ENCODE measurements at regions of chr14 and their contacts with region 1.

Region 1: DNA sequence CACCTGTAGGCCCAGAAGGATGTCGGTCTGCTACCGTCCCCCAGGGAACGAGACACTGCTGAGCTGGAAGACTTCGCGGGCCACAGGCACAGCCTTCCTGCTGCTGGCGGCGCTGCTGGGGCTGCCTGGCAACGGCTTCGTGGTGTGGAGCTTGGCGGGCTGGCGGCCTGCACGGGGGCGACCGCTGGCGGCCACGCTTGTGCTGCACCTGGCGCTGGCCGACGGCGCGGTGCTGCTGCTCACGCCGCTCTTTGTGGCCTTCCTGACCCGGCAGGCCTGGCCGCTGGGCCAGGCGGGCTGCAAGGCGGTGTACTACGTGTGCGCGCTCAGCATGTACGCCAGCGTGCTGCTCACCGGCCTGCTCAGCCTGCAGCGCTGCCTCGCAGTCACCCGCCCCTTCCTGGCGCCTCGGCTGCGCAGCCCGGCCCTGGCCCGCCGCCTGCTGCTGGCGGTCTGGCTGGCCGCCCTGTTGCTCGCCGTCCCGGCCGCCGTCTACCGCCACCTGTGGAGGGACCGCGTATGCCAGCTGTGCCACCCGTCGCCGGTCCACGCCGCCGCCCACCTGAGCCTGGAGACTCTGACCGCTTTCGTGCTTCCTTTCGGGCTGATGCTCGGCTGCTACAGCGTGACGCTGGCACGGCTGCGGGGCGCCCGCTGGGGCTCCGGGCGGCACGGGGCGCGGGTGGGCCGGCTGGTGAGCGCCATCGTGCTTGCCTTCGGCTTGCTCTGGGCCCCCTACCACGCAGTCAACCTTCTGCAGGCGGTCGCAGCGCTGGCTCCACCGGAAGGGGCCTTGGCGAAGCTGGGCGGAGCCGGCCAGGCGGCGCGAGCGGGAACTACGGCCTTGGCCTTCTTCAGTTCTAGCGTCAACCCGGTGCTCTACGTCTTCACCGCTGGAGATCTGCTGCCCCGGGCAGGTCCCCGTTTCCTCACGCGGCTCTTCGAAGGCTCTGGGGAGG is at the start of gene LTB4R:
- DNase-seq: peak; percentile 77
- ATAC-seq: peak; percentile 89
- H3K4me3 Mint-ChIP-seq: peak within 1 kb of the TSS; percentile 72
- H3K27ac Mint-ChIP-seq: peak within 1 kb of the TSS; percentile 94
- H3K4me1 Mint-ChIP-seq: peaks cover 84% of the 10 kb centered on the region
- H3K27me3 Mint-ChIP-seq: no peaks in the 10 kb centered on the region
- total RNA-seq, gene LTB4R: 26.9 to 28.0 TPM

Region 2: DNA sequence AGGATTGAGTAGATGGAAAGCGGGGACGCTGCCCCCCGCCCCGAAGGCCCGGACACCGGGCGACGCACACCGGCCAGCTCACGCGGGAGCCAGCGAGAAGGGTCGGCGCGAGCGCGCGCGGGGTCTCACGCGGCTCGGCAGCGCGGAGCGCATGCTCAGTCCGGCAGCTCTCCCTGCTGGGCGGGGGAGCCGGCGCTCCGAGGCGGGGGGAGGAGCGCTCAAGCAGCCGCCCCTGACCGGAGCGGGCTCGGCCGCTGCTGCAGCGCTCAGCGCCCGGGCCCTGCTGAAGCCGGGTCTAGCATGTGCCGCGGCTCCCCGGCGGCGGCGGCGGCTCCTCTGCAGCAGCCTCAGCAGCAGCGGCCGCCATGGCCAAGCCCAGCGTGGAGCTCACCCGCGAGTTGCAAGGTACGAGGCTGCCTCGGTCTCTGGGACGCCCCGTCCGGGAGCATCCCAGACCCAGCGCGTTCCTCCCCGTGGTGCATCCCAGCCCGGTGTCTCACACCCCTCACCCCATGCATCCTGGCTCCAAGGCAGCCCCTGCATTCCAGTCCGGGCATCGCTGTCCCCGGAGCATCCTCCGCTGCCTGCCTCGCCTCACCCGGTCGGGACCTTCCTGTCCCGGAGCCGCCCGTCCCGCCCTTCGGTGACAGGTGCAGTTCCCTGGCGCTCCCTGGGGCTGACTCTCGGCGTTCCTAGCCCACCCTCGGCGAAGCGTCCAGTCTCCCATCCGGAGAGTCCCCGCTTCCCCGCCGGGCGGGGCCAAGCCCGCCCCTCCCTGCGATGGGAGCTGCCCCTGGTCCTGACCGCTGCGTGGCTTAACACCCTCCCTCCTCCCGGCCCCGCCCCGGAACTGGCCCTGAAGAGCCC is 258.9 kb before region 1 on chr14 and contains the start of gene CARMIL3:
- CTCF ChIA-PET with region 1: no interaction called
- POLR2A ChIA-PET with region 1: no interaction called
- DNase-seq: peak; percentile 73
- ATAC-seq: peak; percentile 85
- H3K4me3 Mint-ChIP-seq: peak within 1 kb of the TSS; percentile 70
- H3K27ac Mint-ChIP-seq: peak within 1 kb of the TSS; percentile 70
- H3K4me1 Mint-ChIP-seq: peaks cover 26% of the 10 kb centered on the region
- H3K27me3 Mint-ChIP-seq: peaks cover 36% of the 10 kb centered on the region
- total RNA-seq, gene CARMIL3: 0.86 to 0.95 TPM

Region 3: GRCh38 chr14:24271134-24271833 is 39.6 kb before region 1 on chr14 and contains the start of gene RABGGTA:
- CTCF ChIA-PET with region 1: interaction called, 57 read pairs
- POLR2A ChIA-PET with region 1: interaction called, 4 read pairs
- DNase-seq: peak; percentile 93
- ATAC-seq: peak; percentile 94
- H3K4me3 Mint-ChIP-seq: peak within 1 kb of the TSS; percentile 90
- H3K27ac Mint-ChIP-seq: peak within 1 kb of the TSS; percentile 91
- H3K4me1 Mint-ChIP-seq: peaks cover 47% of the 10 kb centered on the region
- H3K27me3 Mint-ChIP-seq: no peaks in the 10 kb centered on the region
- total RNA-seq, gene RABGGTA: 47.7 to 51.8 TPM

Region 4: GRCh38 chr14:24289649-24290249 is 21.2 kb before region 1 on chr14:
- CTCF ChIA-PET with region 1: interaction called, 22 read pairs
- POLR2A ChIA-PET with region 1: no interaction called
- DNase-seq: peak; percentile 68
- ATAC-seq: peak; percentile 84
- H3K4me3 Mint-ChIP-seq: no peak overlapping the region
- H3K27ac Mint-ChIP-seq: no peak overlapping the region
- H3K4me1 Mint-ChIP-seq: peaks cover 28% of the 10 kb centered on the region
- H3K27me3 Mint-ChIP-seq: no peaks in the 10 kb centered on the region

Region 5: GRCh38 chr14:24339284-24340151 is 28.6 kb after region 1 on chr14 and contains the start of gene RIPK3:
- CTCF ChIA-PET with region 1: interaction called, 142 read pairs
- POLR2A ChIA-PET with region 1: no interaction called
- DNase-seq: peak; percentile 82
- ATAC-seq: peak; percentile 97
- H3K4me3 Mint-ChIP-seq: peak within 1 kb of the TSS; percentile 90
- H3K27ac Mint-ChIP-seq: peak within 1 kb of the TSS; percentile 92
- H3K4me1 Mint-ChIP-seq: peaks cover 24% of the 10 kb centered on the region
- H3K27me3 Mint-ChIP-seq: peaks cover 24% of the 10 kb centered on the region
- total RNA-seq, gene RIPK3: 26.9 to 28.6 TPM

Region 6: DNA sequence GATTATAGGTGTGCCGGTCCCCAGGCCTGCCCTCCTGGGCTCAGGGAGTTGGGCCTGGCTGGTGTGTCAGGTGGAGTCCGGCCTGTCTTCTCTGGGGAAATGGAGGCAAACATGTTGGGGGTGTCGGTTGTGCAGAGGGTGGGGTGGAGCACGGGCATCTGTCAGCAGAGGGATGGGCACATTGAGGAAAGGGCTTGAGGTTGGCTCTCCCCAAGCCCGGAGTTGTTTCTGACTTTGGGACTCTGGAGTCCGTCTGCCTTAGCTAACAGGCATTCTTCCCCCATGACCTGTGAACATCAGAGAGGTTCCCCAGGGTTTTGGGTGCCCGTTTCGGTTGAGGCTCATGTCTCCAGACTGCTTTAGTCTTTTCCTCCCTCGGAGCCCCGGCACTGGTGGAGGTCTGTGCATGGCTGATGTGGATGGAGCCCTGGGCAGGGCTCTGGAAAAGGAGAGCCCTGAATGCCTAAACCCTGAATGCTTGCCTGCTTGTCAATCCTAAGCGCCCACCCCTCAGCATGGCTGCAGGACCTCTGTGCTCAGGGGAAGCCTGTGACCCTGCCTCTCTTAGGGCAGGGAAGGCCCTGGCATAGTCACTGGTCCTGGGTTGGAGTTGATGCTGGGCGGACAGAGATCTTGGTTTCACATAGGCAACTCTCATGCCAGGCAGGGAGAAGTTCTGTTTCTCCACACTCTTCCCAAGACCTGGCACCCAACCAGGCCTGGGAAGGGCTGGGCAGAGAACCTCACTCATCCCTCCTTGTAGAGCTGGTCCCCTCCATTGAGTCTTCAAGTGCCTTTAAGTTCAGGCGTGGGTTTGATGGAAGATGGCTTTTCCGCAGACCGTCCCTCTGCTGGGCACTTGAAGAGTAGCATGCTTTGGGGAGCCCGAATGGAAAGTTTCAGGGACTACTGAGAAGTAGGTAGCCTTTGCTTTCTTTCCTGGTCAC is 100.8 kb after region 1 on chr14:
- CTCF ChIA-PET with region 1: no interaction called
- POLR2A ChIA-PET with region 1: no interaction called
- DNase-seq: peak; percentile 47
- ATAC-seq: peak; percentile 73
- H3K4me3 Mint-ChIP-seq: no peak overlapping the region
- H3K27ac Mint-ChIP-seq: no peak overlapping the region
- H3K4me1 Mint-ChIP-seq: no peaks in the 10 kb centered on the region
- H3K27me3 Mint-ChIP-seq: no peaks in the 10 kb centered on the region

Measured in activated CD8-positive, alpha-beta T cell treated with anti-CD3 and anti-CD28 coated beads, Interleukin-2, amount 10 ng/mL, durations not matched to agents 7 days and 5 days (primary cell).